ENCODE measurements at regions of chr4 and their contacts with region 1.

Region 1: DNA sequence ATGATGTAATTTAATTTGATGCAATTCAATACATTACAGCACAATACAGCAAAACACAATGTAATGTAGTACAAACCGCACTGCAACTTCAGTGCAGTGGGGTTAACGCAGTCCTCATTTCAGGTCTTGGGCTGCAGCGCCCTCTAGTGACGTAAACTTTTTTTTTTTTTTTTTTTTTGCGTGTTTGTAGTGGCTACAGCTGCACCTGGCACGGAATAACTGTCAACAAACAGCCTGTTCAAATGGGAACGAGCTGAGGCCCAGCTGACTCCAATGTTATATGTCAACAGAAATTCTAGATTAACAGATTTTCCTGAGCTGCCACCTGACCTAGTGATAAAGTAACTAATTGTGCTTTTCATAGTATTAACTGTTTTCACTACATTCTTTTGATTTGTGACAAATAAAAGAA is 33.5 kb upstream of the RASSF6 start:
- DNase-seq: peak in 1 of 3 donors; percentile 50
- ATAC-seq: peak; percentile 88
- H3K4me3 ChIP-seq: no peak overlapping the region
- H3K4me1 ChIP-seq: no peaks in the 10 kb centered on the region
- CTCF ChIP-seq: no peak

Region 2: GRCh38 chr4:73527196-73527595 is 126.5 kb before region 1 on chr4:
- intact Hi-C with region 1: no loop called
- DNase-seq: no peak
- ATAC-seq: no peak
- H3K4me3 ChIP-seq: no peak overlapping the region
- H3K4me1 ChIP-seq: no peaks in the 10 kb centered on the region
- CTCF ChIP-seq: no peak

Region 3: GRCh38 chr4:73573794-73574406 is 79.8 kb before region 1 on chr4:
- intact Hi-C with region 1: loop called in 1 of 2 experiments (anchors 5 kb)
- DNase-seq: peak in 2 of 3 donors; percentile 39 to 78
- ATAC-seq: peak; percentile 92
- H3K4me3 ChIP-seq: no peak overlapping the region
- H3K4me1 ChIP-seq: no peaks in the 10 kb centered on the region
- CTCF ChIP-seq: no peak

Region 4: DNA sequence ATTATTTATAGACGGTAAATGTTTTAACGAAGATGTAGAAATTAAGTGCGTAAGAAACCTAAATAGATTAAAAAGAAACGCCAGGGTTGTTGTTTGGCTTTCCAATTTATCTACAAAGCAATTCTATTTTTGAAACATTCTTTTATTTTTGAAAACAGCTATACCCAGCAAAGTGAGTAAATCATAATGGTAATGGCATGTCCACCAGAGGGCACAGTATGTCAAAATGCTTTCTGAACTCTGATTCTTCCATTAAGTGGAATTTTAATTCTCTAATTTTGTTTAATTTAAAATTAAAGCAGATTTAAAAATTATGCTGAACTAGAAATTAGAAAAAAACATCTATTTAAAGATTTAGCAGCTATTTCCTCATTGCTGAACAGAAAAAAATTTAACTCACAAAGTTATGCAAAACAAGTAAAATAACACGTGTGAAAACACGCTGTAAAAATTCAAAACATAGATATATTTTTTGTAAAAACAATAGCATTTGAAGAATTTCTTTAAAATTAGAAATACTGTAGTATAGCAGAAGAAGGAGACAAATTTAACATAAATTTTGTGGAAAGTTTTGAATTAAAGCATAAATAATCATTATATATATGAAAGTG is 60.0 kb before region 1 on chr4:
- intact Hi-C with region 1: loop called in 1 of 2 experiments (anchors 5 kb)
- DNase-seq: peak in 1 of 3 donors; percentile 68
- ATAC-seq: no peak
- H3K4me3 ChIP-seq: no peak overlapping the region
- H3K4me1 ChIP-seq: no peaks in the 10 kb centered on the region
- CTCF ChIP-seq: no peak

Region 5: GRCh38 chr4:73729534-73730165 is 75.9 kb after region 1 on chr4:
- intact Hi-C with region 1: no loop called
- DNase-seq: peak in 2 of 3 donors; percentile 53 to 76
- ATAC-seq: peak; percentile 91
- H3K4me3 ChIP-seq: no peak overlapping the region
- H3K4me1 ChIP-seq: no peaks in the 10 kb centered on the region
- CTCF ChIP-seq: peak; percentile 57

Measured in mucosa of descending colon (tissue), 3 donors.